Right ventricle myocardium superior (tissue), 1 donor: ENCODE measurements at regions of chr3 and their contacts with region 1.

Region 1: DNA sequence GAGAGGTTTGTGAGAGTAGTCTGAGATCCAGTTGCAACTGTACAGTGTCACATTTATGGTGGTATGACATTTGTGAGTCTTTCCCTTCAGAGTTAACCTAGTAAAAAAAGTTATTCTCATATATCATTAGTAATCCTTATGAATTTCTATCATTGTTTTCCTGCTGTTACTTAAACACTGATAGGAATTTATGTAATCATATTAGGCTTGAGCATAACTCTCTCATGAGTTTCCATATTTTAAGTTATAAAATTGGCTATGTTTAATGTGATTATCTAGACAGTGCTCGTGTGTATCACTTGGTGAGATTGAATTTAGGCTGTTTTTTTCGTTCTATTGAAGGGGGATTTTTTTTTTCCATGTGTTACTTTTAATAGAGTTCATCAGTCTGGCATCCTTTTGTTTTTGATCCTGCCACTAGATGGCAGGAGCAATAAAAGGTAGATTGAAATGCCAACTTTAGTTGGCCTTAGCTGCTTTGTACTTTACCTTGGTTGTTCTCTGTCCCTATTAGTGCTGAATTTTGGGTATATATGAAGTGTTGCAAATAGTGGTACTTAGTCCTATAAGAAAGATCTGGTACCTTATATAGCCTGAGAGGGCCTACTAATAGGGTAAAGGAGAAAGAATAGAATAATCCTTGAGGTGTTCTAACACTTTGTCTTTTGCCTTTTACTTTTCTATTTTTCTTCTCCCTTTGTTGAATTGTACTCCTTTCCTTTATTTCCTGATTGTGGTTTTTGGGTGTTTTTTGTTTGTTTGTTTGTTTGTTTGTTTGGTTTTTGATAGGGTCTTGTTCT is 17.9 kb downstream of the STT3B start:
- DNase-seq: no peak
- ATAC-seq: peak; percentile 62

Region 2: DNA sequence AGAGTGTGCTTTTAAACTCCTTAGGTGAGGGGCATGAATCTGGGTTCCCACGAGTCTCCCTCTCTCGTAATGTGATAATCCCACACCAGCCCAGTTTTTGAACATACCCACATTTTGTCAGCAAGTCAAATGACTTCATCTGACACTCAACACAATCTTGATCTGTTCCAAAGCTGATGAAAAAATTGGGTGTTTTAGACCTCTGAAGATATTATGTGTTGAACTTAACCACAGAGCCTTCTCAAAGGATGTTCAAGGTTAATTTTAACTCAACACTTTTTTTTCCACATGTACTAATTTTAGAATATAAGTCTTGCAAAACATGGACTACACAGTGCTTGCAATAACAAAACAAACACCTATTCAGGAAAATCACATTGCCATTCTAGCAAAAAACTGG is 821.1 kb before region 1 on chr3:
- intact Hi-C with region 1: no loop called
- DNase-seq: no peak
- ATAC-seq: peak; percentile 57

Region 3: DNA sequence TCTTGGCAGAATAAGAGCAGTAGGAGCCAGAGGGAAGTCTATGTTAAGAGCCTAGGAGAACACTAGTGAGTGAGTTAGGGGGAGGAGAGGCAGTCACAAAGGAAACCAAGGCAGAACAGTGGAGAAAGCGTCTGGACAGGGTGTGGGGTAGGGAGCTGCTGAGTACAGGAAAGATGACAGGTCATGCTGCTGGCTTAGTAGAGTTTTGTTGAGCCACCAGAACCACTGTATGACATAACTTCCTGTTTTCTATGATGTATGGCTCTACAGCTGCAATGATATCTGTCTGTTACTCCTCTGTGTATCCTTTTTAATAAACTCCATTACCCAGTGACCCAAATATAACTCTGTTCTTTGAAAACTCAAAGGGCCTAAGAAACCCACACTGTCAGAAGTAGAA is 28.5 kb before region 1 on chr3:
- intact Hi-C with region 1: no loop called
- DNase-seq: no peak
- ATAC-seq: peak; percentile 41

Region 4: GRCh38 chr3:31639828-31640227 is 89.2 kb after region 1 on chr3:
- intact Hi-C with region 1: loop called (anchors 10 kb)
- DNase-seq: no peak
- ATAC-seq: no peak

Region 5: GRCh38 chr3:31768479-31769123 is 217.9 kb after region 1 on chr3:
- intact Hi-C with region 1: loop called (anchors 5 kb)
- DNase-seq: peak; percentile 52
- ATAC-seq: peak; percentile 85